H1 (cell line): ENCODE measurements at regions of chr2 and their contacts with region 1.

Region 1: GRCh38 chr2:112726497-112727190 is 5.8 kb downstream of the NT5DC4 start:
- DNase-seq: peak; percentile 89 to 94
- H3K4me3 ChIP-seq: no peak overlapping the region
- H3K27ac ChIP-seq: no peak overlapping the region
- H3K4me1 ChIP-seq: no peaks in the 10 kb centered on the region; a peak in 2 of 7 replicates
- H3K27me3 ChIP-seq: no peaks in the 10 kb centered on the region
- CTCF ChIP-seq: peak in 2 of 3 experiments; percentile 98; a peak in 3 of 4 replicates
- EP300 ChIP-seq: no peak
- POLR2A ChIP-seq: no peak
- RAD21 ChIP-seq: peak; percentile 99

Region 2: DNA sequence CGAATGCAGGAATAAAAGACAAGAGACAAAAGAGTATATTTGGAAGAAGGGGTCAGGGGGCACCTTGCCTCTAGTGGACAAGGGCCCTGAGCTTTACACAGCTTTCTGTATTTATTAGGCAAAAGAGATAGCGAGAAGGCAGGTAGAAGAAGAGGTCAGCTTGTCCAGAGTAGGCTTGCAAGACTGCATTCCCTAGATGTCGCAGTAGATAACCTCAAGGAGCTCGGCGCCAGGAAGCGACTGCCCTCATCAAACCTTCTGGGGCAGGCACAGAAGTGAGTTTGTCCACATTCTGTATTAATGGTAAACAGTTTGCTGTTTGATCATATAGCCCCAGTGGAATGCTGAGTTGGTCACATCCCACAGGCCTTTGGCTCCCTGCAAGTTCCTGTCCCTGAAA is 135.3 kb before region 1 on chr2:
- CTCF ChIA-PET with region 1: interaction called, 17 read pairs
- POLR2A ChIA-PET with region 1: no interaction called
- DNase-seq: no peak
- H3K4me3 ChIP-seq: no peak overlapping the region
- H3K27ac ChIP-seq: no peak overlapping the region
- H3K4me1 ChIP-seq: peaks cover 0 to 3% (median 1%) of the 10 kb centered on the region in 4 experiments; a peak in 4 of 7 replicates
- H3K27me3 ChIP-seq: no peaks in the 10 kb centered on the region
- CTCF ChIP-seq: no peak
- EP300 ChIP-seq: no peak
- POLR2A ChIP-seq: no peak
- RAD21 ChIP-seq: no peak

Region 3: GRCh38 chr2:112636231-112636960 is 90.2 kb before region 1 on chr2:
- CTCF ChIA-PET with region 1: interaction called, 185 read pairs
- POLR2A ChIA-PET with region 1: no interaction called
- DNase-seq: no peak
- H3K4me3 ChIP-seq: no peak overlapping the region
- H3K27ac ChIP-seq: no peak overlapping the region
- H3K4me1 ChIP-seq: peaks cover 0 to 5% (median under 1%) of the 10 kb centered on the region in 4 experiments; a peak in 2 of 7 replicates
- H3K27me3 ChIP-seq: no peaks in the 10 kb centered on the region
- CTCF ChIP-seq: no peak
- EP300 ChIP-seq: no peak
- POLR2A ChIP-seq: no peak
- RAD21 ChIP-seq: no peak

Region 4: GRCh38 chr2:112671801-112672200 is 54.8 kb before region 1 on chr2:
- CTCF ChIA-PET with region 1: interaction called, 40 read pairs
- POLR2A ChIA-PET with region 1: no interaction called
- DNase-seq: no peak
- H3K4me3 ChIP-seq: no peak overlapping the region
- H3K27ac ChIP-seq: no peak overlapping the region
- H3K4me1 ChIP-seq: no peaks in the 10 kb centered on the region
- H3K27me3 ChIP-seq: 0 out of 7 replicates have a peak, but pooled peaks cover 0 to 3% (median 1%) of the 10 kb centered on the region in 4 experiments
- CTCF ChIP-seq: no peak
- EP300 ChIP-seq: no peak
- POLR2A ChIP-seq: no peak
- RAD21 ChIP-seq: no peak

Region 5: GRCh38 chr2:112701052-112701451 is 25.6 kb before region 1 on chr2:
- CTCF ChIA-PET with region 1: interaction called, 17 read pairs
- POLR2A ChIA-PET with region 1: no interaction called
- DNase-seq: no peak
- H3K4me3 ChIP-seq: no peak overlapping the region
- H3K27ac ChIP-seq: no peak overlapping the region
- H3K4me1 ChIP-seq: no peaks in the 10 kb centered on the region
- H3K27me3 ChIP-seq: no peaks in the 10 kb centered on the region
- CTCF ChIP-seq: no peak
- EP300 ChIP-seq: no peak
- POLR2A ChIP-seq: no peak
- RAD21 ChIP-seq: no peak

Region 6: GRCh38 chr2:112737542-112738232 is 11.0 kb after region 1 on chr2:
- CTCF ChIA-PET with region 1: interaction called, 40 read pairs
- POLR2A ChIA-PET with region 1: interaction called, 4 read pairs
- DNase-seq: no peak
- H3K4me3 ChIP-seq: no peak overlapping the region
- H3K27ac ChIP-seq: no peak overlapping the region
- H3K4me1 ChIP-seq: no peaks in the 10 kb centered on the region
- H3K27me3 ChIP-seq: no peaks in the 10 kb centered on the region
- CTCF ChIP-seq: no peak
- EP300 ChIP-seq: no peak
- POLR2A ChIP-seq: no peak
- RAD21 ChIP-seq: no peak

Region 7: GRCh38 chr2:112941753-112942658 is 215.4 kb after region 1 on chr2:
- CTCF ChIA-PET with region 1: interaction called, 34 read pairs
- POLR2A ChIA-PET with region 1: no interaction called
- DNase-seq: peak; percentile 68 to 88
- H3K4me3 ChIP-seq: no peak overlapping the region
- H3K27ac ChIP-seq: no peak overlapping the region
- H3K4me1 ChIP-seq: no peaks in the 10 kb centered on the region
- H3K27me3 ChIP-seq: no peaks in the 10 kb centered on the region
- CTCF ChIP-seq: peak; percentile 94 to 97 (median 96)
- EP300 ChIP-seq: no peak
- POLR2A ChIP-seq: no peak
- RAD21 ChIP-seq: peak; percentile 90 to 91